ENCODE measurements at regions of chr2 and their contacts with region 1.

Region 1: DNA sequence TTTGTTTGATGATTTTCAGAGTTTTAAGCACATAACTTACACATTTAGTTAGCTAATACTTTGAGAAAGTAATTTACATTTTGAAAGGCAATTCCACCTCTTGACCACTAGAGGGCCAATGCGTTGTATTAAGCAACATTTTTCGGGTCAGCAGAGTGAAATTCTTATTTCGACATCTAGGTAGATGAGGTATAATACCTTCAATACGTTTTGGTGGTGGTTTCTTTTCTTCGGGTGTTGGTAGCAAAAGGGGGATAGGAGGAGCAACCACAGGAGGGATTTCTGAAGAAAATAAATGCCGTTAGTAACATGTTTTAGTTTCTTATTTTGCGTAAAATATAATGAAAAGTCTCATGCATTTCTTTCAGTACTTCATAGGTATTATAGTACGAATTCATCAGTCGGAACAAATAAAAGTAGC is 106.3 kb downstream of the TTN start:
- DNase-seq: no peak
- H3K4me3 ChIP-seq: no peak overlapping the region
- H3K27ac ChIP-seq: no peak overlapping the region
- H3K4me1 ChIP-seq: no peaks in the 10 kb centered on the region
- H3K27me3 ChIP-seq: no peaks in the 10 kb centered on the region
- CTCF ChIP-seq: peak in 2 of 3 experiments; percentile 42 to 81; a peak in 2 of 4 replicates
- EP300 ChIP-seq: no peak
- POLR2A ChIP-seq: no peak
- RAD21 ChIP-seq: peak; percentile 23 to 38; a peak in 3 of 4 replicates

Region 2: DNA sequence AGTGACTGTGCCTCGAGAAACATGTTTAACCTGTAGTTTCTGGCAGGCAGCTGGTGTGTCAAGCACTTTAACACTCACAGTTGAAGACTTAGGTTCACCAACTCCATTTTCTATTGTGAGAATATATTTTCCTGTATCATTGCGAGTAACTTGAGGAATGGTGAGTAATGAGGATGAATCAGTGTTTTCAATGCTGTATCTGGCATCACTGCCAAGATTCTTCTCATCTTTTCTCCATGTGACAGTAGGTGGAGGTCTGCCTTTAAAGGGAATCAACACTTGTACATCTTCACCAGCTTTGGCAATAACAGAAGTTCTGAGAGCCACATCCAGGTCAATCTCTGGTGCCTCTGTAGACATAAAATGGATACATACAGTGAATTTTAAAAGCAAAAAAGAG is 147.9 kb before region 1 on chr2:
- CTCF ChIA-PET with region 1: no interaction called
- POLR2A ChIA-PET with region 1: no interaction called
- DNase-seq: no peak
- H3K4me3 ChIP-seq: no peak overlapping the region
- H3K27ac ChIP-seq: no peak overlapping the region
- H3K4me1 ChIP-seq: no peaks in the 10 kb centered on the region
- H3K27me3 ChIP-seq: no peaks in the 10 kb centered on the region
- CTCF ChIP-seq: no peak
- EP300 ChIP-seq: no peak
- POLR2A ChIP-seq: no peak
- RAD21 ChIP-seq: no peak

Region 3: GRCh38 chr2:178718283-178718682 is 17.4 kb after region 1 on chr2:
- CTCF ChIA-PET with region 1: interaction called, 21 read pairs
- POLR2A ChIA-PET with region 1: no interaction called
- DNase-seq: no peak
- H3K4me3 ChIP-seq: no peak overlapping the region
- H3K27ac ChIP-seq: no peak overlapping the region
- H3K4me1 ChIP-seq: peaks cover 0 to 3% (median 0%) of the 10 kb centered on the region in 4 experiments; a peak in 2 of 7 replicates
- H3K27me3 ChIP-seq: no peaks in the 10 kb centered on the region
- CTCF ChIP-seq: no peak
- EP300 ChIP-seq: no peak
- POLR2A ChIP-seq: no peak
- RAD21 ChIP-seq: no peak

Region 4: DNA sequence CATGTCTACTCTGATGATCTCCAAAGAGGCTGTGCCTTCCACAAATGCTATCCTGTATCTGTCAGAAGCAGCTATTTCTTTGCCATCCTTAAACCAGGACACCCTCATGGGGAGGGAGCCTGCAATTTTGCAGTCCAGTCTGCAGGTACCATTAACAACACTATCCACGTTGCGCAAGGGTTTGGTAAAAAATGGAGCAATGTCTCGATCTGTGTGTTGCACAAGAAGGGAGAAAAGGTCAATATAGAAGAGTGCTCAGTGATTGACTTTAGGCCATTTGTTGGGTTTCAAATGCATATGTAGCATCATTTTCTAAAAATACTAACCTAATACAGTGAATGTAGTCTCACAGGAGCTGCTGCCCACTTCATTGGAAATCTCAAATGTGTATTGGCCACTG is 32.0 kb after region 1 on chr2:
- CTCF ChIA-PET with region 1: interaction called, 11 read pairs
- POLR2A ChIA-PET with region 1: no interaction called
- DNase-seq: no peak
- H3K4me3 ChIP-seq: no peak overlapping the region
- H3K27ac ChIP-seq: no peak overlapping the region
- H3K4me1 ChIP-seq: no peaks in the 10 kb centered on the region
- H3K27me3 ChIP-seq: no peaks in the 10 kb centered on the region
- CTCF ChIP-seq: no peak
- EP300 ChIP-seq: no peak
- POLR2A ChIP-seq: no peak
- RAD21 ChIP-seq: no peak